Mammary epithelial cell (primary cell): ENCODE measurements at regions of chr1 and their contacts with region 1.

Region 1: GRCh38 chr1:86507935-86508582 is 38.8 kb upstream of the CLCA4 start:
- DNase-seq: no peak
- H3K4me3 ChIP-seq: no peak overlapping the region
- H3K27ac ChIP-seq: no peak overlapping the region
- H3K4me1 ChIP-seq: peaks cover 19% of the 10 kb centered on the region
- H3K27me3 ChIP-seq: no peaks in the 10 kb centered on the region
- CTCF ChIP-seq: peak; percentile 35 to 47

Region 2: DNA sequence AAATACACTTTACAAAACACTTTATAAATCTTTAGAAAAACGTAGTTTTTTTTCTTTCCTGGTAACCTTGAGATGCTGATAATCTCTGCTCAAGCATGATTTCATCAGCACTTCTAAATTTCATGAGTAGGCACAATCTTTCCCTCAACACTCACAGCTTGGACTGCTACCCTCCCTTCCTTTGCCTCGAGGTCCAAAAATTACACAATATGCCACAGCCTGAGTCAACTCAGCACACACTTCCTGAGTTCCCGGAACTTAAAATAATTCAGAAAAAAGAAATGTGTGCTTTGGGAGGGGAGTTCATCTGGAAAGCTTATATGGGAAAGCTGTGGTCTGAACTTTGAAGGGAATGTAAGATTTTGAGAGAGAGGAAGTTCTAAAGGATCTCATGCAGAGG is 78.2 kb before region 1 on chr1:
- CTCF ChIA-PET with region 1: no interaction called
- dilution Hi-C with region 1: loop called (anchors 5 kb)
- in situ Hi-C with region 1: no loop called
- intact Hi-C with region 1: no loop called
- DNase-seq: peak; percentile 89
- H3K4me3 ChIP-seq: no peak overlapping the region
- H3K27ac ChIP-seq: peak overlapping the region; percentile 81
- H3K4me1 ChIP-seq: peaks cover 36% of the 10 kb centered on the region
- H3K27me3 ChIP-seq: no peaks in the 10 kb centered on the region
- CTCF ChIP-seq: no peak